WTC11 (cell line): ENCODE measurements at regions of chr2 and their contacts with region 1.

Region 1: DNA sequence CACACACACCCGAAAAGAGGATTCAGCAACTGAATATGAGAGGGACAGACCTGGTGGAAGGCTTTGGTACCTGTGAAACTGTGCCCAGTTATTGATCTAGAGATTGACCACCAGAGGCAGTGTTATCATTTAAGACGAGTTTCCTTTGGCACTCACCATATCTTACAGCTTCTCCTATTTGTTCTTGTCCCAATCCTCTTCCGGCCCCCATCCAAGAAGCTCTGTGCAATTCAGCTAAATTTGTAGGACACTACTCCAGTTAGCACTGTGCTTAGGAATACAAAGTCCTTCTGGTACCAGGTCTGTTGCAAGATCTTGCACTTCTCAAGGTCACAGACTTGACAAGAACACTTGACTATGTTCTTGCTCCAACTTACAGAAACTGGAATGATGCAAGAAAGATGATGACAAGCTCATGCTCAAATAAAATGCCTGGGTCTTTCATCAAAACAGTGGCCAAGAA is 177.7 kb downstream of the TMEM247 start:
- DNase-seq: no peak
- ATAC-seq: peak; percentile 88
- H3K4me3 Mint-ChIP-seq: no peak overlapping the region
- H3K27ac Mint-ChIP-seq: no peak overlapping the region
- H3K4me1 Mint-ChIP-seq: 0 out of 2 replicates have a peak, but pooled peaks cover 2% of the 10 kb centered on the region
- H3K27me3 Mint-ChIP-seq: no peaks in the 10 kb centered on the region; the same call in 1 of the 2 replicates
- CTCF ChIP-seq: no peak; the same call in 1 of the 2 replicates

Region 2: GRCh38 chr2:46601328-46601963 is 55.6 kb before region 1 on chr2:
- CTCF ChIA-PET with region 1: no interaction called
- POLR2A ChIA-PET with region 1: interaction called, 10 read pairs
- DNase-seq: no peak
- ATAC-seq: no peak
- H3K4me3 Mint-ChIP-seq: no peak overlapping the region
- H3K27ac Mint-ChIP-seq: no peak overlapping the region
- H3K4me1 Mint-ChIP-seq: no peaks in the 10 kb centered on the region
- H3K27me3 Mint-ChIP-seq: no peaks in the 10 kb centered on the region
- CTCF ChIP-seq: no peak

Region 3: DNA sequence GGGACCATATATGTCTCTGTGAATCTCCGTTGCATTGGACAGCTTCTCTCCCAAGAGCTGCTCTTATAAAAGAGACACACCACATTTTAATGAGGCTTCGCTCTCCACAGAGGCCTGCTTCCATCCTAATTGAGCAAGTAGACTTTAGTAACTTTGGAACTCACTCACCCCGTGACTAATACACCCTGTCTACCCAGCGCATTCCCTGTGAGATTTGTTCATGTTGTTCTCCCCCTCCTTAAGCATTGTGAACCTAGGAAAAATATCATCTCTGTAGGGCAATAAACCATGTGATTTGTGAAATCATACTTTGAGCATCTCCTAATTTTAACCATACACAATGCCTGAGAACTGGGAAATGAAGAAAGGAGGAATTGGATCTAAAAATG is 201.6 kb after region 1 on chr2:
- CTCF ChIA-PET with region 1: no interaction called
- POLR2A ChIA-PET with region 1: no interaction called
- DNase-seq: no peak
- ATAC-seq: no peak
- H3K4me3 Mint-ChIP-seq: no peak overlapping the region
- H3K27ac Mint-ChIP-seq: no peak overlapping the region
- H3K4me1 Mint-ChIP-seq: no peaks in the 10 kb centered on the region
- H3K27me3 Mint-ChIP-seq: no peaks in the 10 kb centered on the region
- CTCF ChIP-seq: no peak